ENCODE measurements at regions of chr5 and their contacts with region 1.

Region 1: DNA sequence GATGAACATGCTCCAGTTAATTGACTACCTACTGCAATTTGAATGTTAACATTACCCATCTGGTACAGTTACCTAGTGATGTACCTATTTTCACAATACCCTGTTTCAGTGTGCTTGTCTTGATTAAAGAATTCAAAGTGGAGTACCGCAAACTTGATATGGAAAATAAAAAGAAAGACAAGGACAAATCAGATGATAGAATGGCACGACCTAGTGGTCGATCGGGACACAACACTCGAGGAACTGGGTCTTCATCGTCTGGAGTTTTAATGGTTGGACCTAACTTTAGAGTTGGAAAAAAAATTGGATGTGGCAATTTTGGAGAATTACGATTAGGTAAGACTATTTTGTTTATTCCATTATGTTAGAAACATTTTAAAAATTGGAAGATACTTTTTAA is 33.5 kb downstream of the CSNK1G3 start:
- DNase-seq: no peak
- ATAC-seq: no peak
- H3K4me3 Mint-ChIP-seq: no peak overlapping the region
- H3K27ac Mint-ChIP-seq: no peak overlapping the region
- H3K4me1 Mint-ChIP-seq: peaks cover 76% of the 10 kb centered on the region
- H3K27me3 Mint-ChIP-seq: no peaks in the 10 kb centered on the region
- CTCF ChIP-seq: no peak

Region 2: DNA sequence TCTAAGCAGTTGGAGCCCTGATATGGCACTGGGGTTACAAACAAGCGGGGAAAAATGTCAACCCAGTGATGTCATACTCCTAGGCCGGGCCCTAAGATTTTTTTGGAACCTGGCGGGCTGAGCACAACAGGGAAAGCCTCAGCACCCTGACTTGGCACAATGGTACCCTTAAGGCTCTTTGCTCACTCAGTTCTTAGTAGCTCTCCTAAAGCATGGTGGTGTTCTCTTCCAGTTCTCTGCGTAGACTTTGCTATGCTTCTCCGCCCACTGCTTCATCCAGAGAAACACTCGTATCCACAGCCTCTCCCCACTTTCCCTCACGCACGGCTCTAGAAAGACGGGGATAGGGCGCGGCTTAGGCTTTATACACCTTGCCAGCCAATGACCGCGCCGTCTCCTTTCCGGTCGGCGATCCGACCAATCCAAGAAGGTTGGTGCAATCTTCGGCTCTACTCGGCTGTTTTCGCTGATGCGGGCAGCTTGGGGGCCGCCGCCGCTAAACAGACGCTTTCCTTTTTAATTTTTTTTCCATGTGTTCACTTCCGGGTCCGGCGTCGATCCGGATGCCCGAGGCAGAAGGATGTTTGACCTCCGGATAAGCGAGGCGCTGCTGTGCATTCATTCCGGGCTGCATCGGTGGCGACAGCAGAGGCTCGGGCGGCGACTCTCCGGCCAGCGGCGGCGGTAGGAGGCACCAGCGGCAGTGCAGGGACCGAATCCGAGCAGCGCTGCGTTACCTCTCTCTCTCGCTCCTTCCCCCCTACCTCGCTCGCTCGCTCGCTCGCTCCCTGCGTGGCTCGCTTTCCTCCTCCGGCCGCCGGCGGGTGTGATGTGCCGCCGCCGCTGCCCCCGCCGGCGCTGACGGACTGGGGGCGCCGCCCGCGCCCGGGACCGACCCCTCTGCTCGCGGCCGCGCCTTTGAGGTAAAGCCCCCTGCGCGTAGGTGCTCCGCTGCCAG is 33.6 kb before region 1 on chr5 and contains the start of gene CSNK1G3:
- CTCF ChIA-PET with region 1: no interaction called
- POLR2A ChIA-PET with region 1: interaction called, 25 read pairs
- intact Hi-C with region 1: loop called (anchors 1 kb)
- DNase-seq: peak; percentile 81
- ATAC-seq: peak; percentile 91
- H3K4me3 Mint-ChIP-seq: peak within 1 kb of the TSS; percentile 99
- H3K27ac Mint-ChIP-seq: peak within 1 kb of the TSS; percentile 99
- H3K4me1 Mint-ChIP-seq: peaks cover 47% of the 10 kb centered on the region
- H3K27me3 Mint-ChIP-seq: no peaks in the 10 kb centered on the region
- CTCF ChIP-seq: no peak
- total RNA-seq, gene CSNK1G3: 79.9 and 82.7 TPM in 2 replicates

Region 3: DNA sequence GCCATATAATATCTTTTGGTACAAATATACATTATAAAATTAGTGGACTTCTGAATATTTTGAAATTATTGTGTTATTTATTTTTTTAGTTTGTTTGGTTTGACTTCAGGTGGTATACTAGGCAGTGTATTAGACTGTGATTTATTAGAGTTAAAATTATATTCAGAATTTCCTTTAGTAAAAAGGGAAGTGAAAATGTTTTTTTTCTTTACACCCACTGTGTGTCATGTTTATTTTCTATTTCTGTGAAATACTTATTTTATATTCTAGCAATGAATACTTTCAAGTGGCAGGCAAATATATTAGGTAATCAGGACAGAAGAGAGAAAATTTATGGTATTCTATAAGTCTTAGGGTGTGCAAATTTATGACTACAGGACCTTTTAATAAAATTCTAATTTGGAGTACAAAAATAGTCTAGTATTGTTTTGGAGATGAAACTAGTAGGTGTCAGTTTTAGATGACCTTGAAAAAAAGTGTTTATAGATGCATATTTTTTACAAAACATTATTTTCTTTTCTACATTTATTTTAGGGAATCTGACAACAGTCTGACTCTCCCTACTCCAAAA is 24.7 kb before region 1 on chr5:
- CTCF ChIA-PET with region 1: no interaction called
- POLR2A ChIA-PET with region 1: interaction called, 4 read pairs
- intact Hi-C with region 1: loop called (anchors 2 kb)
- DNase-seq: no peak
- ATAC-seq: peak; percentile 55
- H3K4me3 Mint-ChIP-seq: peak overlapping the region; percentile 53
- H3K27ac Mint-ChIP-seq: peak overlapping the region; percentile 61
- H3K4me1 Mint-ChIP-seq: peaks cover 90% of the 10 kb centered on the region
- H3K27me3 Mint-ChIP-seq: no peaks in the 10 kb centered on the region
- CTCF ChIP-seq: no peak

Region 4: GRCh38 chr5:123527190-123527589 is 18.3 kb before region 1 on chr5:
- CTCF ChIA-PET with region 1: no interaction called
- POLR2A ChIA-PET with region 1: interaction called, 5 read pairs
- intact Hi-C with region 1: loop called (anchors 2 kb)
- DNase-seq: no peak
- ATAC-seq: no peak
- H3K4me3 Mint-ChIP-seq: no peak overlapping the region
- H3K27ac Mint-ChIP-seq: no peak overlapping the region
- H3K4me1 Mint-ChIP-seq: peaks cover 76% of the 10 kb centered on the region
- H3K27me3 Mint-ChIP-seq: no peaks in the 10 kb centered on the region
- CTCF ChIP-seq: no peak

Region 5: GRCh38 chr5:123559434-123559775 is 13.9 kb after region 1 on chr5:
- CTCF ChIA-PET with region 1: no interaction called
- POLR2A ChIA-PET with region 1: no interaction called
- intact Hi-C with region 1: loop called (anchors 1 kb)
- DNase-seq: no peak
- ATAC-seq: no peak
- H3K4me3 Mint-ChIP-seq: no peak overlapping the region
- H3K27ac Mint-ChIP-seq: no peak overlapping the region
- H3K4me1 Mint-ChIP-seq: peaks cover 24% of the 10 kb centered on the region
- H3K27me3 Mint-ChIP-seq: no peaks in the 10 kb centered on the region
- CTCF ChIP-seq: no peak